Ovary (tissue), 10 donors: ENCODE measurements at regions of chr1 and their contacts with region 1.

Region 1: GRCh38 chr1:32933742-32934322 is 30.8 kb downstream of the RNF19B start:
- DNase-seq: no peak
- H3K4me3 ChIP-seq: no peak overlapping the region
- H3K27ac ChIP-seq: no peak overlapping the region
- H3K4me1 ChIP-seq: peaks cover 1% of the 10 kb centered on the region
- H3K27me3 ChIP-seq: no peaks in the 10 kb centered on the region
- CTCF ChIP-seq: no peak
- EP300 ChIP-seq: no peak
- POLR2A ChIP-seq: no peak

Region 2: GRCh38 chr1:32981003-32981901 is 47.4 kb after region 1 on chr1:
- intact Hi-C with region 1: no loop called
- DNase-seq: no peak
- H3K4me3 ChIP-seq: no peak overlapping the region
- H3K27ac ChIP-seq: no peak overlapping the region
- H3K4me1 ChIP-seq: no peaks in the 10 kb centered on the region
- H3K27me3 ChIP-seq: no peaks in the 10 kb centered on the region
- CTCF ChIP-seq: no peak
- EP300 ChIP-seq: no peak
- POLR2A ChIP-seq: no peak

Region 3: GRCh38 chr1:33055210-33056008 is 121.6 kb after region 1 on chr1:
- intact Hi-C with region 1: loop called (anchors 5 to 10 kb)
- DNase-seq: peak; percentile 42 to 74 (median 53)
- H3K4me3 ChIP-seq: no peak overlapping the region
- H3K27ac ChIP-seq: no peak overlapping the region
- H3K4me1 ChIP-seq: no peaks in the 10 kb centered on the region
- H3K27me3 ChIP-seq: no peaks in the 10 kb centered on the region
- CTCF ChIP-seq: peak; percentile 44 to 60 (median 44)
- EP300 ChIP-seq: no peak
- POLR2A ChIP-seq: no peak

Region 4: DNA sequence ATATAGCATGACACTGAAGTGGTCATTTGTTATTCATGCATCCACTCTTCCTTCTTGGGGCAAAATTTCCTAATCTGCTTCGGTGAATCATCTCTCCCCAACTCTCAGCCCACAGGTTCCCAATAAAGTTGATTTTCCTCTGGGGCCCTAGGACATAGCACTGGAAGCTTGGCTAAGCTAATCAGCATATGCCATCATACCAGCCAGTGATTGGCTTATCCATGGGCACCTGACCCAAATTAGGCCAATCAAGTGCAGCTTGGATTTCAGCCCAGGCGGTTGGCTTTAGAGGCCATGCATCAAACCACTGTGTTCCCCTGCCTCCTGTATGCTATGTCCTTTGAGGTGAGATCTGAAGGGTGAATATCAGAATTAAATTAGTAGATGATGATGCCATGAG is 1301.8 kb after region 1 on chr1:
- intact Hi-C with region 1: no loop called
- DNase-seq: no peak
- H3K4me3 ChIP-seq: no peak overlapping the region
- H3K27ac ChIP-seq: no peak overlapping the region
- H3K4me1 ChIP-seq: no peaks in the 10 kb centered on the region
- H3K27me3 ChIP-seq: no peaks in the 10 kb centered on the region
- CTCF ChIP-seq: no peak
- EP300 ChIP-seq: no peak
- POLR2A ChIP-seq: no peak